SK-N-SH (cell line): ENCODE measurements at regions of chr5 and their contacts with region 1.

Region 1: DNA sequence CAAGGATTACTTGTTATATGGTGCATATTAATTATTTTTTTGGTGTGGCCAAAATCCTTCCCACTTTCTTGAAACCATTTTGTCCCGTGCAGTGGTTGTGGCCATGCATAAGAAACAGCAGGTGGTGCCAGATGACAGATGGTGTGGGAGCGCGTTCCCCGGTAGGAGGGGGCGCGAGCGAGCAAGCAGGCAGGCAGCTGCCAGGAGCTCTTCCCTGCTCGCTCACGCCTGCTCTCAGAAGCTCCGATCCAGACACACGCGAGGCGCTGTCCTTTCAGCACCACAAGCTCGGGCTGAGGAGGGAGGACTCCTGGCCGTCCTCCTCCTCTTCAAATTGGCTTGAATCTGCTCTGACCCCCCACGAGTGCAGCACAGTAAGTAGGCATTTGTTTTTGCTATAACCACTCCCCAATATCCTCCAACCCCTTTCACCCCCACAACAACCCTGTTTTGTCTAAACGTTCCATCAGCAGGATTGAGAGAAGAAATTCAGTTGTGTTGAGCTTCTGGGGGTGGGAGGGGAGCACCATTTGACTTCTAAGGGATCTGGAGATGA is at the start of gene NSG2:
- DNase-seq: peak; percentile 85
- H3K4me3 ChIP-seq: peak within 1 kb of the TSS in 1 of 2 experiments; percentile 47; a peak in 2 of 4 replicates
- H3K27ac ChIP-seq: peak within 1 kb of the TSS in 1 of 2 experiments; percentile 94; a peak in 2 of 4 replicates
- H3K4me1 ChIP-seq: peaks cover 0 to 18% of the 10 kb centered on the region in 2 experiments; a peak in 2 of 4 replicates
- H3K27me3 ChIP-seq: no peaks in the 10 kb centered on the region
- CTCF ChIP-seq: peak; percentile 89
- EP300 ChIP-seq: peak in 1 of 2 experiments; percentile 20; a peak in 1 of 4 replicates
- RAD21 ChIP-seq: peak; percentile 99
- polyA plus RNA-seq, gene NSG2: 4.3 and 10.7 TPM in 2 replicates

Region 2: DNA sequence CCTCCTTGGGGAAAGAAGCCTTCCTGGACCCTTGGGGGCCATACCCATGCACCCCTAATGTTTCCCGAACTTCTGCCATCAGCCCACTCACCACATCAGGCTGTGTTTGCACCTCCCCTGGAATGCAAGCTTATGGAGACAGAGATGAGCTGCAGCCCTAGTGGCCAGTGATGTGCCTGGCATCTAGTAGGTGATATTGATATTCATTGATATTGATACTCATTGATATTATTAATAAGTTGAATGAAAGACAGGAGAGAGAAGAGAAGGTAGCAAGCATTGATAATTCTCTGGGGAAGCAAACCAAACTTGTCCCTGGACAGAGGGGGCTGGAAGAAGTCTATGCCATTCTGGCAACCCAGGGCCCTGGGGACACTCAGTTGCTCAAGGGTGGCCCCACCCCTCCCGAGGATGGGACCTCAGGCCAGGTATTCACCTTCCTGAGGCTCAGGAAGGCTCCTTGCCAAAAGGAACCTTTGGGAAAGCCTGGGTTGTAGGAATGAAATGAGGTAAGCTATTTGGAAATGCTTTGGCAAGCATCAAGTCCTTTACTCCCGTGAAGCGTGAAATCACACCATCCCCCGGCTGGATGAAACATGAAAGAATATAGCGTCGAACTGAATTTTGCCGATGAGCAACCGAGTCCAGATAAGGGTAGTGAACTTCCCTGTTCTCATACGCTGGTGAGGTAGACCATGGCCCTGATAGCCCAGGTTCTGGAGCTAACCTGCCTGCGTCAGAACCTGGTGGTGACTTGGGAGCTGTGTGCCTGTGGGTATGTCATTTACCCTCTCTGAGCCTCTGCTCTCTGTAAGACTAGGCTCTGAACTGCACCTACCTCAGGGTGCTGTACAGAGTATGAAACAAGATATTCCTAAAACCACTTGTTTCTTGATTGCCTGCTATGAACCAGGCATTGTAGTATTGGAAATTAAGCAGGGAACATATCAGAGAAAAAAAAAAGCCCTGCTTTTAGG is 324.0 kb before region 1 on chr5:
- CTCF ChIA-PET with region 1: no interaction called
- POLR2A ChIA-PET with region 1: no interaction called
- DNase-seq: no peak
- H3K4me3 ChIP-seq: no peak overlapping the region
- H3K27ac ChIP-seq: peak overlapping the region in 1 of 2 experiments; percentile 95; a peak in 2 of 4 replicates
- H3K4me1 ChIP-seq: peaks cover 0 to 50% of the 10 kb centered on the region in 2 experiments; a peak in 2 of 4 replicates
- H3K27me3 ChIP-seq: no peaks in the 10 kb centered on the region; the same call in 1 of the 2 replicates
- CTCF ChIP-seq: peak; percentile 17; the same call in 1 of the 2 replicates
- EP300 ChIP-seq: no peak
- RAD21 ChIP-seq: no peak

Region 3: DNA sequence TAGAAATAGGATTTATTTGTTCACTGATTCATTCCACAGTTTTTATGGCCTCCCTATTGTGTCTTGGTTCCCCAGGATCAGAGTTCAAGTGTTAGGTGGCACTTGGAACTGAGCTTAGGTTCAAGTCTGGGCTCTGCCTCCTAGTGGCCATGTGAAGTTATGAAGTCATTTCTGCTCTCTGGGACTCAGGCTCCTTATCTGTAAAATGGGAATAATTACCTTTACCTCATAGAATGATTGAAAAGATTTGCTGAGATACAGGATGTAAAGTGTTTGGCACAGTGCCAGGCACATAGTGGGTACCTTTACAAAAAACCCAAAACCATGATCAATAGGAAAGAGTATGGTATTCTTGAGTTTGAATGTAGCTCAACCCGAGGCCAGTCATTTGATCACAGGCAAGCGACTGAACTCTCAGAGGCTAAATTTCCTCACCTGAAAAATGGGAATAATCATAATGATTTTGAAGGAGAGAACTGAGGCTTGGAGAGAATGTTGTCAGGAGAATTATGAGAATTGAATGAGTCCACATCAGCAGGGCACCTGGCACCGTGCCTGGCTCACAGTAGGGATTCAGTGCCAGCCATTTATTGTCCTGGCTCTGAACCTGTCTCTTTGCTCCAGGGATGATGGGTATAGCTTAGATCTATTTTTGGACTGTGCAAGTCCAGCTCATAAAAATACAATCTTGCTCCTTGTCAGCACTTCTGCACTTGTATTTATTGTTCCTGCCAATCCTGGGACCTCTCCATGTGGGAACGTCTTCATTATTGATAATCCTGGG is 10.7 kb after region 1 on chr5:
- CTCF ChIA-PET with region 1: interaction called, 14 read pairs
- POLR2A ChIA-PET with region 1: no interaction called
- DNase-seq: no peak
- H3K4me3 ChIP-seq: no peak overlapping the region
- H3K27ac ChIP-seq: no peak overlapping the region; a peak in 1 of 4 replicates
- H3K4me1 ChIP-seq: peaks cover 0 to 13% of the 10 kb centered on the region in 2 experiments; a peak in 2 of 4 replicates
- H3K27me3 ChIP-seq: no peaks in the 10 kb centered on the region
- CTCF ChIP-seq: peak; percentile 33; the same call in 1 of the 2 replicates
- EP300 ChIP-seq: no peak
- RAD21 ChIP-seq: no peak

Region 4: GRCh38 chr5:174083056-174083827 is 37.7 kb after region 1 on chr5:
- CTCF ChIA-PET with region 1: interaction called, 14 read pairs
- POLR2A ChIA-PET with region 1: interaction called, 5 read pairs
- DNase-seq: no peak
- H3K4me3 ChIP-seq: no peak overlapping the region
- H3K27ac ChIP-seq: peak overlapping the region; percentile 65 to 100; a peak in 3 of 4 replicates
- H3K4me1 ChIP-seq: peaks cover 22 to 49% of the 10 kb centered on the region in 2 experiments
- H3K27me3 ChIP-seq: no peaks in the 10 kb centered on the region
- CTCF ChIP-seq: no peak
- EP300 ChIP-seq: no peak
- RAD21 ChIP-seq: no peak

Region 5: DNA sequence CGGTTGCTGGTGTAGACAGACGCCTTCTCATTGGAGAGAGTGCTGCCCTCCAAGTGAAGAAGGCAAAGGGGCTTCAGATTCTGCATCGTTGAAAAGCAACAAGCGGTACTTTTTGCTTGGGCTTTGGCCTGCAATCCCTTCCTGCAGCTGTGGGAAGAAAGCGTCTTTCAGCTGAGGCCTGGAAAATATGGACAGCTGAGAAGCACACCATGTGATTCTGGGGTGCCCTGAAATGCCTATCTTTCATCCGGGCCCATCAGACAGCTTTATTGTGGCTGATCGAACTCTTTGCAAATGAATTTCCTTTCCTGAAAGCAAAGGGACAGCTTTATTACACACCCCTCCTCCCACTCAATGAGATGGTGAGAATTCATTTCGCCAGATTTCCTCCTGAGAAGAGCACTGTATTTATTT is 73.9 kb after region 1 on chr5:
- CTCF ChIA-PET with region 1: interaction called, 22 read pairs
- POLR2A ChIA-PET with region 1: no interaction called
- DNase-seq: no peak
- H3K4me3 ChIP-seq: no peak overlapping the region
- H3K27ac ChIP-seq: peak overlapping the region in 1 of 2 experiments; percentile 85; a peak in 2 of 4 replicates
- H3K4me1 ChIP-seq: peaks cover 0 to 21% of the 10 kb centered on the region in 2 experiments; a peak in 2 of 4 replicates
- H3K27me3 ChIP-seq: no peaks in the 10 kb centered on the region
- CTCF ChIP-seq: no peak
- EP300 ChIP-seq: no peak
- RAD21 ChIP-seq: no peak

Region 6: GRCh38 chr5:174235221-174236011 is 189.9 kb after region 1 on chr5:
- CTCF ChIA-PET with region 1: interaction called, 10 read pairs
- POLR2A ChIA-PET with region 1: interaction called, 4 read pairs
- DNase-seq: no peak
- H3K4me3 ChIP-seq: no peak overlapping the region
- H3K27ac ChIP-seq: peak overlapping the region in 1 of 2 experiments; percentile 95; a peak in 2 of 4 replicates
- H3K4me1 ChIP-seq: peaks cover 0 to 33% of the 10 kb centered on the region in 2 experiments; a peak in 2 of 4 replicates
- H3K27me3 ChIP-seq: no peaks in the 10 kb centered on the region
- CTCF ChIP-seq: no peak
- EP300 ChIP-seq: no peak
- RAD21 ChIP-seq: no peak

Region 7: DNA sequence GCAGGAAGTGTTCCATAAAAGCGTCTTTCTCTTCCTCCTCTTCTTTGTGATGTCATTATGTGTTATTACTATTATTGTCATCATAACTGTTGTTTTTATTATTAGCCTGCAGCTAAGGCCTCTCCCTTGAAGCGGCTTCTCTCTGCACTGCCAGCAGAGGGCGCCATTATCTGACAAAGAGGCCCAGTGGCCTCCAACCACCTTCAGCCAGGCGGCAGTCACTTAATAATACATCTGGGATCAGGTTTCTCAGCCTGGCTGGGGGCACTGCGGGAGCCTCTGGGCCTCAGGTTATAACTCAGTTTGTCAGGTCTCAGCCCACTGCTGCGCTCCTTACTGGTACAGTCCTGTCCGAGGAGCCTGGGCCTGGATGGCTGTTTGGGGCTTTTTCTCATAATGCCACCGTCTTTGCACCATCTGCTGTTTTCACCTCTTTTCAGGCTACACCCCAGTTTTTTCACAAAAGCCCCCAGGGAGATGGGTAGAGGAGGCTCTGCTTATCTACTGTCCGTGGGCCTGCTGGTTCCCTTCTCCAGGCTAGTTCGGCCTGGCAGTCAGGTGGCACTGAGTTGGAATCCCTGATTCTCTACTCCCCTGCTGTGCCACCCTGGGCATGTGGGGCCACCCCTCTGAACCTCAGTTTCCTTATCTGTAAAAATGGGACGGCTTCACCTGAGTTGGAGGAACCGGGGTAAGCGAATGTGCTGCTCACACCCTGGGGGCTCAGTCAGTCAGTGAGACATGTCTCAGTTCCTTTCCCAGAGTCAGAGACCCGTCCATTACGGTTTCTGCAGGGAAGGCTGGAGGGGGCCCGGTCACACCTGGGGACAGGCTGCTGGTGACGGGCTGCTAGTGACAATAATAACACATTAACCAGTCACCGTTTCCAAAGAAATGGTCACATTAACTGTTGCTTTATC is 282.0 kb after region 1 on chr5:
- CTCF ChIA-PET with region 1: interaction called, 41 read pairs
- POLR2A ChIA-PET with region 1: interaction called, 5 read pairs
- DNase-seq: peak; percentile 77
- H3K4me3 ChIP-seq: no peak overlapping the region; a peak in 1 of 4 replicates
- H3K27ac ChIP-seq: peak overlapping the region in 1 of 2 experiments; percentile 95; a peak in 2 of 4 replicates
- H3K4me1 ChIP-seq: peaks cover 17 to 50% of the 10 kb centered on the region in 2 experiments
- H3K27me3 ChIP-seq: no peaks in the 10 kb centered on the region
- CTCF ChIP-seq: peak; percentile 97
- EP300 ChIP-seq: peak in 1 of 2 experiments; percentile 23; a peak in 1 of 4 replicates
- RAD21 ChIP-seq: peak; percentile 90